ENCODE measurements at regions of chr22 and their contacts with region 1.

Region 1: GRCh38 chr22:19730655-19731360 is 7.5 kb downstream of the GP1BB start:
- DNase-seq: peak in 1 of 2 experiments; percentile 97
- H3K4me3 ChIP-seq: peak overlapping the region in 3 of 4 experiments; percentile 13 to 49 (median 29); a peak in 4 of 8 replicates
- H3K27ac ChIP-seq: no peak overlapping the region
- H3K4me1 ChIP-seq: peaks cover 0 to 4% (median 2%) of the 10 kb centered on the region in 4 experiments; a peak in 2 of 7 replicates
- H3K27me3 ChIP-seq: peaks cover 16 to 46% (median 40%) of the 10 kb centered on the region in 4 experiments
- CTCF ChIP-seq: peak; percentile 92 to 94 (median 94)
- EP300 ChIP-seq: no peak
- POLR2A ChIP-seq: no peak
- RAD21 ChIP-seq: peak; percentile 96 to 98

Region 2: GRCh38 chr22:19661156-19661555 is 69.7 kb before region 1 on chr22:
- CTCF ChIA-PET with region 1: no interaction called
- POLR2A ChIA-PET with region 1: no interaction called
- DNase-seq: no peak
- H3K4me3 ChIP-seq: no peak overlapping the region
- H3K27ac ChIP-seq: no peak overlapping the region
- H3K4me1 ChIP-seq: peaks cover 0 to 9% (median 3%) of the 10 kb centered on the region in 4 experiments; a peak in 4 of 7 replicates
- H3K27me3 ChIP-seq: no peaks in the 10 kb centered on the region; a peak in 1 of 7 replicates
- CTCF ChIP-seq: no peak
- EP300 ChIP-seq: no peak
- POLR2A ChIP-seq: no peak
- RAD21 ChIP-seq: no peak

Region 3: DNA sequence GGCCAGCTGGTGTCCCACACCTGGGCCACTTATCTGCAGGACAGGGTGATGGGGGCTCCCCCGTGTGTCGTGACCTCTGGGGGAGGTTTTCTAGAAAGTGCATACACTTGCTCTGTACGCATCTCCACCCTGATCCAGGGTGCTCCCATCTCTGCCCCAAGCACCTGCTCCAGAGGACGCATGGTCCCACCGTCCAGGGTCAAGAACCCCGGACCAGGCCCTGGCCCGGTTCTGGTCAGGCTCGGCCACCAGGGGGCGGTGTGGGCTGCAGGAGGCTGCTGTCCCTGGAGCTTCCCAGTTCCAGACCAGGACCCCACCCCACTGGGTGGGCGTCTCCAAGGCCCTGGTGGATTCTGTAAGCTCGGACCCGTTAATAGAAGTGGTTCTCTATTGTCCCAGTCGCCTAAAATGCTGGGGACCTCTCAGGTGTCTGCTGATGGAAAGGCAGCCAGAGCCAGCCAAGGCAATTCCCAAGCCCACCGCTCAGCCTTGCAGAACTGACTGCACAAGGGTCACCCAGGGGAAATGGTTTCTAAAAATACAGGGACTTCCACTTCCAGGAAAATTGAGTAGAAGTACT is 51.2 kb before region 1 on chr22:
- CTCF ChIA-PET with region 1: interaction called, 10 read pairs
- POLR2A ChIA-PET with region 1: no interaction called
- DNase-seq: peak in 1 of 2 experiments; percentile 96
- H3K4me3 ChIP-seq: no peak overlapping the region
- H3K27ac ChIP-seq: no peak overlapping the region
- H3K4me1 ChIP-seq: peaks cover 0 to 3% (median 0%) of the 10 kb centered on the region in 4 experiments; a peak in 3 of 7 replicates
- H3K27me3 ChIP-seq: no peaks in the 10 kb centered on the region; a peak in 2 of 7 replicates
- CTCF ChIP-seq: peak; percentile 80 to 87 (median 85)
- EP300 ChIP-seq: no peak
- POLR2A ChIP-seq: no peak
- RAD21 ChIP-seq: peak; percentile 78 to 88

Region 4: GRCh38 chr22:19745155-19746101 is 14.6 kb after region 1 on chr22:
- CTCF ChIA-PET with region 1: interaction called, 168 read pairs
- POLR2A ChIA-PET with region 1: interaction called, 3 read pairs
- DNase-seq: no peak
- H3K4me3 ChIP-seq: no peak overlapping the region
- H3K27ac ChIP-seq: no peak overlapping the region
- H3K4me1 ChIP-seq: peaks cover 0 to 10% (median under 1%) of the 10 kb centered on the region in 4 experiments; a peak in 2 of 7 replicates
- H3K27me3 ChIP-seq: peaks cover 0 to 2% (median 0%) of the 10 kb centered on the region in 4 experiments; a peak in 4 of 7 replicates
- CTCF ChIP-seq: no peak
- EP300 ChIP-seq: no peak
- POLR2A ChIP-seq: no peak
- RAD21 ChIP-seq: no peak

Region 5: GRCh38 chr22:19779685-19780268 is 49.0 kb after region 1 on chr22:
- CTCF ChIA-PET with region 1: interaction called, 13 read pairs
- POLR2A ChIA-PET with region 1: no interaction called
- DNase-seq: no peak
- H3K4me3 ChIP-seq: no peak overlapping the region
- H3K27ac ChIP-seq: no peak overlapping the region
- H3K4me1 ChIP-seq: peaks cover 0 to 9% (median 0%) of the 10 kb centered on the region in 4 experiments; a peak in 2 of 7 replicates
- H3K27me3 ChIP-seq: peaks cover 0 to 2% (median 0%) of the 10 kb centered on the region in 4 experiments; a peak in 3 of 7 replicates
- CTCF ChIP-seq: no peak
- EP300 ChIP-seq: no peak
- POLR2A ChIP-seq: no peak
- RAD21 ChIP-seq: no peak

Region 6: DNA sequence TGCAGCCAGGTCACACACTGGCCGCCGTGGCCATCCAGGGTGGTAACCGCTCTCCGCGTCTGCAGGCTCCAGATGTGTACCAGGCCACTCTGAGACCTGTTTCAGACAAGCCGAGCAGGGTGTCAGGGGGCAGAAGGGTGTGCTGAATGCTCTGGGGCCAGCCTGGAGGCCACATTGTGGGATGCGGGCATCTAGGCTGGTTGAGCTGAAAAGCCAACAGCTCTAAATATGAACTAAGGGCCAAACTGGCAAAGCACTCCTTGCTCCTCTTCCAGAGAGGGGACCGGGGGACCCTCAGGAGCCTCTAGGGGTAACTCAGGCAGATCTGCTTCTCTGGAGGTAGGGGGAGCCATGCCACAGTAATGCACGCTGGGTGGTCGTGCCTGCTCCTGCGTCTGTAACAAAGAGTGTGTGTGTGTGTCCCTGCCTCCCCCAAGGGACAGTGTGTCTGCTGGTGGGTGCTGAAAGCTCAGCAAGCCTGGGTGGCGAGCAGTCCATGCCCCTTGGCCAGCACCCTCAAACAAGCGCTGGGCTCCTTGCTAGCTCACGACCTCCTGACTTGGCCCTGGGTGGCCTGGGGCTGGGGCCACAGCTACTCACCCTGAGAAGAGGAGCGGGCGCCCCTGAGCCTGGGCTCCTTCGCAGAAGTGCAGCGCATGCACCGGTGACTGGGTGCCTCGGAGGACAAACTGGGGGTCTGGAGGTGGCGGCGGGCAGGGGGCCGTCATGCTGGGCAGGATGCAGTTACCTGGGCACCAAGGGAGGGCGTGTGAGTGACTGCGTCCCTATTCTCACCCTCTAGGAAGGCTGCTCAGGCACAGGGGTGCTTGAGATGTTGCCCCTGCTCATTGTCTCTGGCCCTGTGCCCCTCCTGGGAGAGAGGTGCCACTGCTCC is 90.1 kb after region 1 on chr22:
- CTCF ChIA-PET with region 1: interaction called, 18 read pairs
- POLR2A ChIA-PET with region 1: no interaction called
- DNase-seq: peak in 1 of 2 experiments; percentile 50
- H3K4me3 ChIP-seq: no peak overlapping the region
- H3K27ac ChIP-seq: no peak overlapping the region; the same call in 1 of the 2 replicates
- H3K4me1 ChIP-seq: peaks cover 0 to 10% (median 1%) of the 10 kb centered on the region in 4 experiments; a peak in 4 of 7 replicates
- H3K27me3 ChIP-seq: peaks cover 0 to 2% (median 0%) of the 10 kb centered on the region in 4 experiments; a peak in 1 of 7 replicates
- CTCF ChIP-seq: peak; percentile 47 to 59 (median 55)
- EP300 ChIP-seq: no peak
- POLR2A ChIP-seq: no peak
- RAD21 ChIP-seq: peak; percentile 43 to 53; a peak in 3 of 4 replicates

Region 7: DNA sequence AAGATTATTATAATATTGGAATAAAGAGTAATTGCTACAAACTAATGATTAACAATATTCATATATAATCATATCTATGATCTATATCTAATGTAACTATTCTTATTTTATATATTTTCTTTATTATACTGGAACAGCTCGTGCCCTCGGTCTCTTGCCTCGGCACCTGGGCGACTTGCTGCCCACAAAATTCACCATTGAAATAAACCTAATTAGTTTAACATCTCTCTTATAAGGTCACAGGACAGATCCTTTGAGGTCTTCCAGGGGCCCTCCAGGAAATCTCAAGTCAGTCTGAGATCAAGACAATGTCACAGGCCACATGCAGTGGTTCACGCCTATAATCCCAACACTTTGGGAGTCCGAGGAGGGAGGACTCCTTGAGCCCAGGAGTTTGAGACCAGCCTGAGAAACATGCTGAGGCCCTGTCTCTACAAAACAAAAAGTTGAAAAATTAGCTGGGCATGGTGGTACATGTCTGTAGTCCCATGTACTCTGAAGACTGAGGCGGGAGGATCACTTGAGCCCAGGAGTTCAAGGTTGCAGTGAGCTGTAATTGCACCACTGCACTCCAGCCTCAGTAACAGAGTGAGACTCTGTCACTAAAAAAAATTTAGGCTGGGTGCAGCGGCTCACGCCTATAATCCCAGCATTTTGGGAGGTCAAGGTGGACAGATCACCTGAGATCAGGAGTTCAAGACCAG is 217.4 kb after region 1 on chr22:
- CTCF ChIA-PET with region 1: interaction called, 30 read pairs
- POLR2A ChIA-PET with region 1: interaction called, 3 read pairs
- DNase-seq: no peak
- H3K4me3 ChIP-seq: no peak overlapping the region
- H3K27ac ChIP-seq: no peak overlapping the region
- H3K4me1 ChIP-seq: peaks cover 0 to 1% (median under 1%) of the 10 kb centered on the region in 4 experiments; a peak in 3 of 7 replicates
- H3K27me3 ChIP-seq: no peaks in the 10 kb centered on the region; a peak in 1 of 7 replicates
- CTCF ChIP-seq: no peak
- EP300 ChIP-seq: no peak
- POLR2A ChIP-seq: no peak
- RAD21 ChIP-seq: no peak

Measured in H1 (cell line).